ENCODE measurements at regions of chr12 and their contacts with region 1.

Region 1: DNA sequence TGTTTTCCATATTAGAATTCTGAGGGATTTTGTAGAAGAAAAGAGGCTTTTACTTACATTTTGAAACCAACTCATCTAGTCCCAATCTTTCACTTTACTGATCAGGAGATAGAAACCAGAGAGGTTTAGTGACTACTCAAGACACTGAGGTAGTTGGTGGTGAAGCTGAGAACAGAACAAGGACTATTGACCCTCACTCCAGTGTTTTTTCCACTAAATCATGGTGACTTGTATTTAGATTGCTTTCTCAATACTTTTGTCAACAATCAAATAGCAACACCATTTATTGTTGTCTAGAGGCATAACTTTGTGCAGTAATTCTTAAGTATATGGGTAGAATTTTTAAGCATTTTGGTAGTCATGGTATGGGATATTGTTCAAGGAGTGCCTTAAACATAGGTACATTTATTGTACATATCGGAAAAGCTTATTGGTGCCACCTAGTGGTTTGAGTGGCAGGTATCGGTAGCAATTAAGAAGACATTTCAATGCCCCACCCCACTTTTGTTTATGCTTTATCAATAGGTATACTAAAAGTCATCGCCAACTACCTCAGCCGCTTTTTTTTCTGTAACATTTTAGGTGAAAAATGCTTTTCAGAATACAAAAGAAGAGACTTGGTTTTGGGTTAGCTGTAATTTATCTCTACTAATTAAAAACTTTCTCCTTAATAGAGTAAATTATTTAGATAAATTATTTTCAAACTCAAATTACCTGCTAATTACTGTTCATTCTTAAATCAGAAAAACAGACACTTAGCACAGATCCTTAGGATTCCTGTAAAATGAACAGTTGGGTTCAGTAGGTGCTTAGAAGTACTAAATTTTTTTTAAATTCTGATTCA is 47.3 kb upstream of the PAWR start:
- DNase-seq: peak; percentile 62 to 69
- H3K4me3 ChIP-seq: no peak overlapping the region
- H3K4me3 Mint-ChIP-seq: no peak overlapping the region
- H3K27ac Mint-ChIP-seq: no peak overlapping the region
- H3K4me1 ChIP-seq: peaks cover 9% of the 10 kb centered on the region; the same call in 1 of the 2 replicates
- H3K4me1 Mint-ChIP-seq: peaks cover 6% of the 10 kb centered on the region
- H3K27me3 ChIP-seq: no peaks in the 10 kb centered on the region
- H3K27me3 Mint-ChIP-seq: no peaks in the 10 kb centered on the region
- CTCF ChIP-seq: peak; percentile 50 to 58

Region 2: GRCh38 chr12:79555028-79555930 is 182.8 kb before region 1 on chr12:
- CTCF ChIA-PET with region 1: no interaction called
- POLR2A ChIA-PET with region 1: no interaction called
- intact Hi-C with region 1: loop called (anchors 1 kb)
- DNase-seq: peak in 1 of 2 experiments; percentile 49
- H3K4me3 ChIP-seq: no peak overlapping the region
- H3K4me3 Mint-ChIP-seq: peak overlapping the region; percentile 12
- H3K27ac Mint-ChIP-seq: peak overlapping the region; percentile 76
- H3K4me1 ChIP-seq: peaks cover 73% of the 10 kb centered on the region
- H3K4me1 Mint-ChIP-seq: peaks cover 34% of the 10 kb centered on the region
- H3K27me3 ChIP-seq: no peaks in the 10 kb centered on the region
- H3K27me3 Mint-ChIP-seq: no peaks in the 10 kb centered on the region
- CTCF ChIP-seq: peak; percentile 56 to 71